ENCODE measurements at regions of chr9 and their contacts with region 1.

Region 1: DNA sequence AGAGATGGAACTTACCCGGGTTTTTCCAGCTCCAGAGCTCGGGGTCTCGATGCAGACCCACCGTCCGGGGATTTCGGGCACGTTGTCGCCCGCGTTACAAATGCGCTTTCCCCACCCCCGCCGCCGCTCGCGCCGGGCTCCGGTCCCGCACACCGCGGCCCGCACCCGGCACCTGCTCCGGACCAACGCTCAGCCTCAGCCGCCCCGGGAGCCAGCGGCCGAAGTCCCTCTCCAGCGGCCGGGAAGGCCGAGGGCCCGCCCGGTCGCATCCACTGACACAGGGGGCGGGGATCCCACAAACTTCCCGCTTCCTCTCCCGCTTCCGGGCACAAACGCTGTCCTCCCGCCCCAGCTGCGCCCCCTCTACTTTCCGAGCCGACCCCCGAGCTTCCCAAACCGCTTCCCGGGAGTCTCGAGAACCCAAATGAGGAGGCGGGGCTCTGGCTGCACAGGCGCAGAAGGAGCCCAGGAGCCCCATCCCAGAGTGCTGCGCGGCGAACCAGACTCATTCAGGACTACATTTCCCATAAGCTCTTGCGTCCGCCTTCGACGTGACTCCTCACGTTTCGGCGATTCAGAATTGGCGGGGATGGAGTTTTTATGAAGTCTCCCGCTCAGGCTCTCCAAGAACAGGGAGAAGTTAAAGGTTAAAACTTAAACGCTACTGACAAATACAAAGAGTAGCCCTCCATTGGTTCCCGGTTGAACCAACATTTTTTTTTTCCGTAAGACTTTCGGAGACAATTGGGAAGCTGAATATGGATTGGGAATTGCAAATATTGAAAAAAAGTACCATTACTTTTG is at the start of gene ZNF782:
- DNase-seq: peak; percentile 96 to 99 (median 98)
- H3K4me3 ChIP-seq: peak within 1 kb of the TSS; percentile 58 to 83 (median 82)
- H3K27ac ChIP-seq: peak within 1 kb of the TSS in 1 of 2 donors; percentile 67
- H3K4me1 ChIP-seq: peaks cover 0 to 9% (median 8%) of the 10 kb centered on the region in 3 donors
- H3K27me3 ChIP-seq: no peaks in the 10 kb centered on the region
- CTCF ChIP-seq: no peak
- total RNA-seq, gene ZNF782: 7.0 TPM

Region 2: DNA sequence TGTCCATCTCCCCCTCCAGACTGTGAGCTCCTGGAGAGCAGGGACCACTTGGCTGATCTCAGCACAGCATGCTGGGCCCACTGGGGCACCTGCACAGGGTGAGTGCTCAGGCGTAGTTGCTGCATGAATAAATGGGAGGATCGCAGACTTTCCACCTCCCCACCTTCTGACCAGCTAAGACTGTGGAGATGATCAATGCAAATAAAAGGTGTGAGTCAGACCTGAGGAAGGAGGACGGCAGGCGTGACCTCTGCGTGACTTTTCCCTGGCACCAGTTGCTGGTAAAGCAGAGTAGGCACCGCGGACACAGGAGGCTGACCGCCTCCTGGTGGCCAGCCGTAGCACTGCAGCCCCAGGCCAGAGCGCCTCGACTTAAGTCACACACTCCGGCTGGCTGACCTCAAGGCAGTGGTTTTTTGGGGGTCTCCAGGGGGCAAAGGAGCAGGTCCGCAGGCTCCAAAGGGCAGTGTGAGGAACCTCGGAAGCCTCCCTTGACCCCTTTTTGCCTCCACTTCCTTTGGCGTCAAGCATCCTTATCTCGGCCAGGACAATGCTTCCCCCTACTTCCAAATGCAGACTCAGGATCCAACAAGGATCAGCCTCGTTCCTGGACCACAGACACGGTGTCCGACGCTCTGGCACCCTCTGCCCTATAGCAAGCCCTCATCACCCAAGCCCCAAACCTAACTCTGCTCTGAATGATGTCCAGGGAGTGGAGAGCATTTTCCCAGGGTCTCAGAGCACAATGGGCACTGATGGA is 544.9 kb after region 1 on chr9:
- intact Hi-C with region 1: loop called (anchors 10 kb)
- DNase-seq: peak; percentile 71 to 92 (median 79)
- H3K4me3 ChIP-seq: no peak overlapping the region
- H3K27ac ChIP-seq: no peak overlapping the region
- H3K4me1 ChIP-seq: peaks cover 0 to 4% (median 0%) of the 10 kb centered on the region in 3 donors
- H3K27me3 ChIP-seq: no peaks in the 10 kb centered on the region
- CTCF ChIP-seq: peak; percentile 93

Measured in kidney (tissue), 22 donors.